ENCODE measurements at regions of chr6 and their contacts with region 1.

Region 1: DNA sequence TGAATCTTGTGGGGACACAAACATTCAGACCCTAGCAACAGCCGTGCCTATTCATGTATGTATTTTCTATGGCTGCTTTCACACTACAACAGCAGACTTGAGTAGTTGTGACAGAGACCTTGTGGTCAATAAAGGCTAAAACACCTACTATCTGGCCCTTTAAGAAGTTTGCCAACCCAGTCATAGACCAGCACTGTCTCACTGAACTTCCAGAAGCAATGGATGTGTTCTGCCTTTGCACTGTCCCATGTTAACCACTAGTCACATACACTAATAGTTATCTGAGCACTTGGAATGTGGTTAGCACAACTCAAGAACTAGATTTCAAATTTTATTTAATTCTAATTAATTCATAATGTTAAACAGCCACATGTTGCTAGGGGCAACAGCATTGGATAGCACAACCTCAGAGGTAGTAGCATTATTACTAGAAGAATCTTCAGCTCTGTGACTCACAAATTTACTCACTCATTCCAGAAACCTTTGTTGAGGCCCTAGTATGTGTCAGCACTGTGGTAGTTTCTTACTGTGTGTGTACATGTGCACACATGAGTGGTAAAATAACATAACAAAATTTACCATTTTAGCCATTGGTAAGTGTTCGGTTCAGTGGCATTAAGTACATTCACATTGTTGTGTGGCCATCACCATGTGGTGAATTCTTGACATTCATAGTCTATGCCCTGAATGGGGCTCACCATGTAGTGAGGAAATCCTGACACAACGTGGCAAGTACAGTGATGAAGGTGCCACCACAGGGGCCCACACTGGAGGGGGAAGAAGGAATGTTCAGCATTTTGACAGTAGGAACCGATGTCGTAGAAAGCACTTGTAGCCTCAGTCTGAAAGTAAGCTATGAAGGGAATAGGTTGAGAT is 107.3 kb downstream of the CEP57L1 start:
- DNase-seq: peak; percentile 38
- H3K4me3 Mint-ChIP-seq: no peak overlapping the region
- H3K27ac Mint-ChIP-seq: peak overlapping the region; percentile 53
- H3K4me1 Mint-ChIP-seq: peaks cover 17% of the 10 kb centered on the region
- H3K27me3 Mint-ChIP-seq: no peaks in the 10 kb centered on the region

Region 2: GRCh38 chr6:108748055-108748454 is 454.6 kb before region 1 on chr6:
- CTCF ChIA-PET with region 1: no interaction called
- POLR2A ChIA-PET with region 1: no interaction called
- intact Hi-C with region 1: no loop called
- DNase-seq: no peak
- H3K4me3 Mint-ChIP-seq: no peak overlapping the region
- H3K27ac Mint-ChIP-seq: no peak overlapping the region
- H3K4me1 Mint-ChIP-seq: peaks cover 5% of the 10 kb centered on the region
- H3K27me3 Mint-ChIP-seq: peaks cover 6% of the 10 kb centered on the region

Region 3: DNA sequence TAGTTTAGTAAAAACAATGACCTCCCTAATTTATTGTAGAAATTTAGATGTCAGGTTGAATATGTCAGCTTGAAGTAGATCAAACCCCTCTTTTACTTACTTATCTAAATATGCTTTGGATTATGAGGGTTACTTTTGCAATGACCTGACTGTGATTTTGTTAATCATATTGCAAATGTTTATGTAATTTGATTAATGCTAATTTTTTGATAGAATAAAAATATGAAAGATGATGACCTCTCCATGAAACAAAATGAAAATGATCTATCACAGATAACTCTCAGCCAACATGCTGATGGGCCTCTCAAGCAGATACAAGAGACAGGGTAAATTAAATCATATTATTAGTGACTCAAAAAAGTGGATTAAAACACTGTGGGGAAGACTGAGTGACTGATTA is 23.7 kb after region 1 on chr6:
- CTCF ChIA-PET with region 1: no interaction called
- POLR2A ChIA-PET with region 1: no interaction called
- intact Hi-C with region 1: no loop called
- DNase-seq: no peak
- H3K4me3 Mint-ChIP-seq: no peak overlapping the region
- H3K27ac Mint-ChIP-seq: no peak overlapping the region
- H3K4me1 Mint-ChIP-seq: no peaks in the 10 kb centered on the region
- H3K27me3 Mint-ChIP-seq: no peaks in the 10 kb centered on the region

Region 4: GRCh38 chr6:109236115-109237076 is 33.7 kb after region 1 on chr6:
- CTCF ChIA-PET with region 1: interaction called, 3 read pairs
- POLR2A ChIA-PET with region 1: no interaction called
- intact Hi-C with region 1: loop called (anchors 5 kb)
- DNase-seq: peak; percentile 25
- H3K4me3 Mint-ChIP-seq: no peak overlapping the region
- H3K27ac Mint-ChIP-seq: no peak overlapping the region
- H3K4me1 Mint-ChIP-seq: peaks cover 5% of the 10 kb centered on the region
- H3K27me3 Mint-ChIP-seq: no peaks in the 10 kb centered on the region

Region 5: DNA sequence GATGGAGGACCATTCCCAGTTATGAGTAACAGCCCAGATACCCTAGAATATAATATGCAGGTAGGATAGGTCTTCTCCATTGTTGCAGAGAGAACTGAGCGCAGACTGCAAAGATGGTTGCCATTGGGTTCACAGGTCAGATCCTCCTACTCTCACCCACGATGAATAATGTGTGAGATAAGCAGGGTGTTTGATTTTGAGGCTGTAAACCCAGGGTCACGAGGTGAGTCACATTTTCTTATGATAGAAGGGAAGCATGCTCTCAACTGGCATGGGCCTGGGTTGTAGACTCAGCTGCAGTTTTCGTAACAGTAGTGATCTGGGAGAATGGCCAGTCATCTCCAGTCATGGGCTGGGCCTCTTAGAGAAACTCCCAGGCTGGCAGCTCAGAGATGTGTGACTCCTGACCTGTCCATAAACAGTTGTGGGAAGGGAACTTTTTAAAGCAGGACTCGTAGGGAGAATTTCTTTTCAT is 105.4 kb after region 1 on chr6:
- CTCF ChIA-PET with region 1: no interaction called
- POLR2A ChIA-PET with region 1: no interaction called
- intact Hi-C with region 1: loop called (anchors 2 kb)
- DNase-seq: peak; percentile 70
- H3K4me3 Mint-ChIP-seq: no peak overlapping the region
- H3K27ac Mint-ChIP-seq: peak overlapping the region; percentile 57
- H3K4me1 Mint-ChIP-seq: peaks cover 31% of the 10 kb centered on the region
- H3K27me3 Mint-ChIP-seq: no peaks in the 10 kb centered on the region